ENCODE measurements at regions of chr15 and their contacts with region 1.

Region 1: DNA sequence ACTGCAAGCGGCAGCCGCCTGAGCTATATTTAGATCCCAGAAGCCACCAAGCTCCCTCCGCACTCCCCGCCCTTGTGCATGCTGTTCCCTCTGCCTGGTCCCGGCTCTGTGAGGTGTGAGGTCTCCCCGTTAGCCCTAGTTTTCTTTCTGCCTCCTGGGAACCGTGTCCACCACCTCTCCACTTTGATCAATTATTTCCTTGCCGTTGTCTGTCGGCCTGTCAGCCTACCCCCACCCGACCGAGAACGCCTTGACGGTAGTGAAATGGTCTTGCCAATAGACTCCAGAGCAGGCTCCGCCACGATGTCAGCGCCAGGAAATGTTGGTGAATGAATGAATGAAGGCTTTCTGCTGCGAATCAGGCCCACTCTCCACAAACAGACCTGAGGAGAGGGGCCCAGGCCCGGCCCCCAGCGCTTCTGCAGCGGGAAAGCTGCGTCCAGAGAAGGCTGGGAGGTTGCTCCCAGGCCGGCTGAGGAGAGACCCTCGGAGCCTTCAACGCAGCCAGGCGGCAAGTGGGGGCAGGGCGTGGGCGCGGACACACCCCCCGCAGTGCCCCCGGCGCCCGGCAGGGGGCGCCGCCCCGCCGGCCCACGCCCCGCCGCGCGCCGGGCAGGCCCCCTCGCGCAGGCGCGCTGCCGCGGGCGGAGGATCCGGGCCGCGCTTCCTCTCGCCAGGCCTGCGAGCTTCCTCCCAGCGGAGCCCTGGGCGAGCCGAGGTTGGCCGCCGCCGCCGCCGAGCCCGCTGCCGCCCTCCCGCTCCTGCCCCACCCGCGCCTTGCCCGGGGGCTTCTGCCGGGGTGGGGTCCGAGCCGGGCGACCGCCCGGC is at the start of gene CSK:
- DNase-seq: peak; percentile 91
- total RNA-seq, gene CSK: 29.5 TPM

Region 2: GRCh38 chr15:74799856-74800547 is 18.4 kb after region 1 on chr15:
- intact Hi-C with region 1: loop called (anchors 2 kb)
- DNase-seq: peak; percentile 93

Region 3: GRCh38 chr15:74889390-74889882 is 107.8 kb after region 1 on chr15:
- intact Hi-C with region 1: no loop called
- DNase-seq: no peak

Region 4: GRCh38 chr15:74937596-74938296 is 156.1 kb after region 1 on chr15 and contains the start of gene COX5A:
- intact Hi-C with region 1: loop called (anchors 2 kb)
- DNase-seq: peak; percentile 97
- total RNA-seq, gene COX5A: 804 TPM

Measured in cardiac septum (tissue), 1 donor.